Activated CD8-positive, alpha-beta T cell treated with anti-CD3 and anti-CD28 coated beads, Interleukin-2, amount 10 ng/mL, durations not matched to agents 7 days and 5 days (primary cell): ENCODE measurements at regions of chr12 and their contacts with region 1.

Region 1: GRCh38 chr12:70733385-70733784 is 96.2 kb upstream of the PTPRB start:
- DNase-seq: peak; percentile 23
- ATAC-seq: no peak
- H3K4me3 Mint-ChIP-seq: no peak overlapping the region
- H3K27ac Mint-ChIP-seq: no peak overlapping the region
- H3K4me1 Mint-ChIP-seq: no peaks in the 10 kb centered on the region
- H3K27me3 Mint-ChIP-seq: no peaks in the 10 kb centered on the region

Region 2: GRCh38 chr12:70178038-70178437 is 555.3 kb before region 1 on chr12:
- CTCF ChIA-PET with region 1: no interaction called
- POLR2A ChIA-PET with region 1: no interaction called
- DNase-seq: no peak
- ATAC-seq: no peak
- H3K4me3 Mint-ChIP-seq: no peak overlapping the region
- H3K27ac Mint-ChIP-seq: no peak overlapping the region
- H3K4me1 Mint-ChIP-seq: no peaks in the 10 kb centered on the region
- H3K27me3 Mint-ChIP-seq: peaks cover 2% of the 10 kb centered on the region

Region 3: DNA sequence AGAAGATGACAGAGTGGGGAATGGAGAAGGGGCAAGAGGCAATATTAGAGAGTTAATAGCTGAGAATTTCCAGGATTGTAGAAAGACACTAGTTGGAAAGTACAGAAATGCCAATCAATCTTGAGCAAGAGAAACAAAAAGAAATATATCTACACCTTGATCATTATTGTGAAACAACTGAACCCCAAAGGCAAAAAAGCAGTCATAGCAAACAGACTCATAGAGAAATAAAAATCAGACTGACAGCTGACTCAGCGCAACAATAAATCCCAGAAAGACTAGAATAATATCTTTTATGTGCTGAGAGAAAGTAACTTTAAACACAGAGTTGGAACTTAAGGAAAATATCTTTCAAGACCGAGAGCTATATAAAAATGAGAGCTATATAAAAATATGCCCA is 149.1 kb before region 1 on chr12:
- CTCF ChIA-PET with region 1: no interaction called
- POLR2A ChIA-PET with region 1: no interaction called
- DNase-seq: no peak
- ATAC-seq: no peak
- H3K4me3 Mint-ChIP-seq: no peak overlapping the region
- H3K27ac Mint-ChIP-seq: no peak overlapping the region
- H3K4me1 Mint-ChIP-seq: no peaks in the 10 kb centered on the region
- H3K27me3 Mint-ChIP-seq: peaks cover 12% of the 10 kb centered on the region

Region 4: GRCh38 chr12:70598467-70599193 is 134.8 kb before region 1 on chr12:
- CTCF ChIA-PET with region 1: no interaction called
- POLR2A ChIA-PET with region 1: no interaction called
- DNase-seq: no peak
- ATAC-seq: no peak
- H3K4me3 Mint-ChIP-seq: no peak overlapping the region
- H3K27ac Mint-ChIP-seq: no peak overlapping the region
- H3K4me1 Mint-ChIP-seq: no peaks in the 10 kb centered on the region
- H3K27me3 Mint-ChIP-seq: no peaks in the 10 kb centered on the region

Region 5: DNA sequence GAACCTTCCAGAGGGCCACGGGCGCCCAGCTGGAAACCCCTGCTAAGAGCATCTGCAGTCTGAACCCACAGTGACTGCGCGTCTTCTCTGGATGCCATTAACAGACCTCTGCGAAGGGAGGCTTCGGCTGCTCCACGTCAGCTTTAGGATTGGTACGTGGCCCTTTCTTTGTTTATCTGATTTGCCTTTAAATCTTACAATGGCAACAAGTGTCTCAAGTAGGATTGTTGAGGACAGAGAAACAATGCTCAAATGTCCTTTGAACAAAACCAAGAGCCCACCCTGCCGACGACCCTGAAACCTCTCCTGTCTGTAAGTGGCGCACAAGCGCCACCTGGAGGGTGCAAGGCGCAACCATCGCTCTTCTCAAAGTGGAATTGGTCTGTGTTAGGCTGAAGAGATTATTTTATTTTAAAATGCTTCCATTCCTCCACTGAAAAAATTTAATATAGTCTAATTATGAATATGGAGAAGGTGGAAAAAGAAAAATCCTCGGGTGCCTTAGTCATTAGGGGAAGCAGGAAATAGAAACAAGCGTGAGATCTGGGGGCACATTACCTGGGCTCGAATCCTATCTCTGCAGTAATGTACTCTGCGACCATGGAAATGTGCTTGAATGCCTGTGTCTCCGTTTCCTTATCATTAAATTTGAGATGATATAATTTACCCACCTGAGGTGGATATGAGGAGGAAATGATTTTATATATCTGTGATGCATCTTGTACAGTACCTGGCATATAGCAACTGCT is 13.5 kb before region 1 on chr12:
- CTCF ChIA-PET with region 1: interaction called, 11 read pairs
- POLR2A ChIA-PET with region 1: no interaction called
- DNase-seq: peak; percentile 39
- ATAC-seq: peak; percentile 64
- H3K4me3 Mint-ChIP-seq: peak overlapping the region; percentile 48
- H3K27ac Mint-ChIP-seq: no peak overlapping the region
- H3K4me1 Mint-ChIP-seq: peaks cover 10% of the 10 kb centered on the region
- H3K27me3 Mint-ChIP-seq: peaks cover 5% of the 10 kb centered on the region